ENCODE measurements at regions of chr13 and their contacts with region 1.

Region 1: GRCh38 chr13:97109841-97110492 is 112.2 kb upstream of the MBNL2 start:
- DNase-seq: peak; percentile 74 to 83 (median 78)
- H3K4me3 ChIP-seq: no peak overlapping the region
- H3K4me3 Mint-ChIP-seq: peak overlapping the region in 6 of 8 donors; percentile 32 to 73 (median 52)
- H3K27ac ChIP-seq: no peak overlapping the region
- H3K27ac Mint-ChIP-seq: peak overlapping the region in 6 of 7 donors; percentile 13 to 91 (median 53)
- H3K4me1 ChIP-seq: peaks cover 16% of the 10 kb centered on the region
- H3K4me1 Mint-ChIP-seq: peaks cover 9 to 14% (median 11%) of the 10 kb centered on the region in 4 donors
- H3K27me3 ChIP-seq: no peaks in the 10 kb centered on the region
- H3K27me3 Mint-ChIP-seq: peaks cover 0 to 8% of the 10 kb centered on the region in 2 donors

Region 2: GRCh38 chr13:97124916-97125809 is 15.2 kb after region 1 on chr13:
- CTCF ChIA-PET with region 1: interaction called, 15 read pairs
- POLR2A ChIA-PET with region 1: no interaction called
- intact Hi-C with region 1: no loop called
- DNase-seq: no peak
- H3K4me3 ChIP-seq: no peak overlapping the region
- H3K4me3 Mint-ChIP-seq: no peak overlapping the region
- H3K27ac ChIP-seq: no peak overlapping the region
- H3K27ac Mint-ChIP-seq: no peak overlapping the region
- H3K4me1 ChIP-seq: no peaks in the 10 kb centered on the region
- H3K4me1 Mint-ChIP-seq: peaks cover 0 to 2% (median 1%) of the 10 kb centered on the region in 4 donors
- H3K27me3 ChIP-seq: no peaks in the 10 kb centered on the region
- H3K27me3 Mint-ChIP-seq: peaks cover 7 to 37% of the 10 kb centered on the region in 2 donors

Region 3: DNA sequence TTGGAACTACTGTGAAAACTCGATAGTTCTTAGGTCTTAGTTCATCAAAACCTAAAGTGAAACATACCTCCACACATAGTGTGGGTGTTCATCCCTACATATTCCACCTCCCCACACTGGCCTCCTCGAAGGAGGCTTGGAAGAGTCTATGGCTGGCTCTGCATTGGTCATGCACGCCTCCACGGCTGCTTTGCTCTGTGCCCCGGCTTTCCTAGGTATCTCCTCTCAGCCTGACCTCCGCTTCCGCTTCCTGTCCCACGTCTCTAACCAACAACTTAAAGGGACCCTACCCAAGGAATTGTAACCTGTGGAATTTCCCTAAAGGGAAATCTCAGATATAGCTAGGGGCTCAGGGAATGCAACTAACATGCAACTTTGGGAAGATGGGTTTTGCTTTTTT is 32.5 kb after region 1 on chr13:
- CTCF ChIA-PET with region 1: interaction called, 10 read pairs
- POLR2A ChIA-PET with region 1: no interaction called
- intact Hi-C with region 1: no loop called
- DNase-seq: no peak
- H3K4me3 ChIP-seq: no peak overlapping the region
- H3K4me3 Mint-ChIP-seq: peak overlapping the region in 6 of 8 donors; percentile 8 to 64 (median 50)
- H3K27ac ChIP-seq: no peak overlapping the region
- H3K27ac Mint-ChIP-seq: peak overlapping the region in 3 of 7 donors; percentile 2 to 59 (median 4)
- H3K4me1 ChIP-seq: no peaks in the 10 kb centered on the region
- H3K4me1 Mint-ChIP-seq: peaks cover 0 to 5% (median 2%) of the 10 kb centered on the region in 4 donors
- H3K27me3 ChIP-seq: no peaks in the 10 kb centered on the region
- H3K27me3 Mint-ChIP-seq: peaks cover 8 to 12% of the 10 kb centered on the region in 2 donors

Region 4: DNA sequence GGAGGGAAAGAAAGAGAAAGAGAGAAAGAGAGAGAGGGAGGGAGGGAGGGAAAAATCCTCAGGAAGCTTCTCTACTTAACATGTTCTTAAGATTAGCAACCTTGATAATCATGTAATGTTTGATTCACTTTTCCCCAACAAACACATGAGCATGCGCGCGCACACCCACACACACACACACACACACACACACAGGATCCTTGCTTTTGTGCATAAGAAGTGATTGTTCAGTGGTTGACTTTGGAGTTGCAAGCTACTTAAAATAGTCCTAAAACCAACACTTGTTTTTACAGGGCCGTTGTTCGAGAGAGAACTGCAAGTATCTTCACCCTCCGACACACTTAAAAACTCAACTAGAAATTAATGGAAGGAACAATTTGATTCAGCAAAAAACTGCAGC is 224.0 kb after region 1 on chr13:
- CTCF ChIA-PET with region 1: interaction called, 255 read pairs
- POLR2A ChIA-PET with region 1: no interaction called
- intact Hi-C with region 1: no loop called
- DNase-seq: no peak
- H3K4me3 ChIP-seq: no peak overlapping the region
- H3K4me3 Mint-ChIP-seq: no peak overlapping the region
- H3K27ac ChIP-seq: no peak overlapping the region
- H3K27ac Mint-ChIP-seq: no peak overlapping the region
- H3K4me1 ChIP-seq: peaks cover 2% of the 10 kb centered on the region
- H3K4me1 Mint-ChIP-seq: peaks cover 5 to 20% (median 16%) of the 10 kb centered on the region in 4 donors
- H3K27me3 ChIP-seq: no peaks in the 10 kb centered on the region
- H3K27me3 Mint-ChIP-seq: no peaks in the 10 kb centered on the region

Region 5: DNA sequence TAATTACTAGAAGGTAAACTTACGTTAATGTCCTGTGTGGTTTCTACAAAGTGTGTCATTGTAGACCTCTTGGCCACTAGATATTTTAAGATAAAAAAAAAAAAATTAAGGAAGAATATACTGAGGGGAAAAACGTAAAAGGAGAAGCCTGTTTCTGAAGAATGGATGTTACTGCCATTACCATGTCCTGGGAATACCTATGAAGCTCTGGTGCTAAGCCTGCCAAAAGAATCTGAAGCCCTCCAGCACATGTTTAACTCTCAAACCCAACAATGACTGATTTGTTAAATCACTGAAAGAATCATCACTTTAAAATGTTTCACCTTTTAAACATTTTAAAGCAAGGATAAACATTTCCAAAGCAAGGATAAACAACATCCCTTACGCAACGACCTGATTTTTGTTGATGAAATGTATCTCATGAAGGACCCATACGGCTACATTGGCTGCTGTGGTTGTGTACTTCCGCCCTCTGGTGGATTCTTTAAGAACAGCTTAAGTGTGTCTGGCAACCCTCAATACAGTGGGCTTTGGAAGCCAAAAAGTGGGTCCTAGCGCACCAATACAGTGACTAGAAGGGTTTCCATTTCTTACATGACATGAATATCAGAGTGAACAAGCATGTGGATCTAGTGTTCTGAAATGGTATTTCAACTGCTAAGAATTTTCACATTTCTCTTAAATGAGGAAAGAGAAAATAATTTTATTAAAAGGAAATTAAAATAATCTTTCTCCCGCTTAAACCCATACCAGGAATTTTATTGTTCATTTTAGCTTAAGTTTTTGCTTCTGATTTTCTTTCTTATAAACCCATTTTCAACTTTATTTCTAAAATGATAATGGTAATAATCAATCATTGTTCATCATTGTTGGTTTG is 249.5 kb after region 1 on chr13:
- CTCF ChIA-PET with region 1: interaction called, 443 read pairs
- POLR2A ChIA-PET with region 1: interaction called, 8 read pairs
- intact Hi-C with region 1: loop called (anchors 1 kb)
- DNase-seq: peak; percentile 50 to 62 (median 56)
- H3K4me3 ChIP-seq: no peak overlapping the region
- H3K4me3 Mint-ChIP-seq: no peak overlapping the region
- H3K27ac ChIP-seq: no peak overlapping the region
- H3K27ac Mint-ChIP-seq: peak overlapping the region in 2 of 7 donors; percentile 26 to 43
- H3K4me1 ChIP-seq: no peaks in the 10 kb centered on the region
- H3K4me1 Mint-ChIP-seq: peaks cover 3 to 6% (median 4%) of the 10 kb centered on the region in 4 donors
- H3K27me3 ChIP-seq: no peaks in the 10 kb centered on the region
- H3K27me3 Mint-ChIP-seq: no peaks in the 10 kb centered on the region